ENCODE measurements at regions of chr1 and their contacts with region 1.

Region 1: GRCh38 chr1:22731924-22732720 is 21.5 kb downstream of the EPHB2 start:
- DNase-seq: peak; percentile 54
- ATAC-seq: peak; percentile 59
- H3K4me3 Mint-ChIP-seq: no peak overlapping the region
- H3K27ac Mint-ChIP-seq: no peak overlapping the region
- H3K4me1 Mint-ChIP-seq: peaks cover 12% of the 10 kb centered on the region
- H3K27me3 Mint-ChIP-seq: no peaks in the 10 kb centered on the region
- CTCF ChIP-seq: no peak

Region 2: DNA sequence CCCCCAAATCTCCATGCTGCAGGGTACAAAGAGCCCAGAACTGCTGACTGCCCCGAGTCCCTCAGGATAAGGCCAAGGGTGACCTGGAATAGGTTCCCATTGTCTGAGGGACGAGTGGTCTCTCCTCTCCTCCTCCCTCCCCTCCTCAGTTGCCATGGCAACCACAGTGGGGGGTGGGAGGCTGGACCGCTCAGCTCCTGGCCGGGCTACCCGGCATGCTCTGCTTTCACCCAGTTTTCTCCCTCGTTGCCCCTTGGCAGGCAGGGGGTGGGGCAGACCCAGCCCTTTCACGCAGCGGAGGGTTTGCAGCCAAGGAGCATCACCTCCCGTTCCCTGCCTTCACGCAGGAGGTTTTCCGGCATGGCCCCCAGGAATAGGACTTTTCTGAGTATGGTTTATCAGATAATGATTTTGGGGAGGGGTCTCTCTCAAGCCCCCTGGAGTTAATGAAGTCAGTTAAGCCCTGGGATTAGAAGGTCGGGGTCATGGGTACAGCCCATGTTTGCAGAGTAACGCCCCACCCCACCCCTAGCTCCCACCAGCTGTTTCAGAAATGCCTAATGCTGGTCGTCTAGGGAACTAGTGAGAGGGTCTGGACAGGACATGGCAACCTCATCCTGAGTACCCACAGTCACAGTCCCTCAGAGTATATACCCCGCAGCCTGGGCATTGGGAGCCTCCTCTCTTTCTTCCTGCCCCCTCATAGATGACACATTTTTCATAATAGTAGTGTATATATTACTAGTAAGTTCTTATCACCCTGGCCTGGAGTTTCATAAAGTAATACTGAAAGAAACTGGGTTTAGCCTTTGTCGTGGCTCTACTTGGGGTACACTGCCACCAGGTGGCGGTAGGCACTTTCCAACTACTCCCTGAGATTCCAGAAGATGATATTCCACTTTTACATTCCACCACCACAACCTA is 58.4 kb before region 1 on chr1:
- CTCF ChIA-PET with region 1: interaction called, 17 read pairs
- POLR2A ChIA-PET with region 1: no interaction called
- DNase-seq: peak; percentile 67
- ATAC-seq: peak; percentile 49
- H3K4me3 Mint-ChIP-seq: no peak overlapping the region
- H3K27ac Mint-ChIP-seq: no peak overlapping the region
- H3K4me1 Mint-ChIP-seq: peaks cover 7% of the 10 kb centered on the region; the same call in 1 of the 2 replicates
- H3K27me3 Mint-ChIP-seq: no peaks in the 10 kb centered on the region
- CTCF ChIP-seq: peak; percentile 46

Region 3: DNA sequence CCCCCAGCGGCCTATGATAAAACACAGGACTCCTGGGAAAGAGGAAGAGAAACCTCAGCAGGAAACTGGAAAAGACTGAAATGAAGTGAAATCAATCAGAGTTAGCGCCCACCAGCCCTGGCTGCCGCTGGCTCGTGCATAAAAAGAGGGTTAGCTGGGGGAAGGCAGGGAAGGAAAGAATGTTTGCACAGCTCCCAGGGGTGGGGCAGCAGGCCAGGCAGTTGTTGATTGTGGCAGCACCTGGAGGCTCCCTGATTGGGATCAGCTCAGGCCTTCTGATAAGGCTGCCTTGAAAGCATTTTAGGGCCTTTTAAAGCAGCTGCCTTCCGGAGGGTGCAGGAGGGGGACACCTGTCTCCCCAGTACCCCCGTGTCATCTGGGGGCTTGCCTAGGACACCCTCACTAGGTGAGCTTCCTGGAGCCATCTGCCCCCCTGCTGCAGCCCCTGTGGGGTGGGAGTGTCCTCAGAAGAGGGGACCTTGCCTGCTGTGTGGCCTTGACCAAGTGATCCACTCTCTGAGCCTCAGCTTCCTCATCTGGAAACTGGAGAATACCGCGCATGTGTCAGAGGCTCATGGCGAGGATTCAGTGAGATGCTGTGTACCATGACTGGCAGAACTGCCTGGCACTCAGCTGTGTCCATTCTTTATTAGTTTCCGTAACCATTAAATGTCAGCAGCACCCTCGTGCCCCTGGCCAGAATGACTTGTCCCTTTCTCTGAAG is 14.9 kb before region 1 on chr1:
- CTCF ChIA-PET with region 1: interaction called, 15 read pairs
- POLR2A ChIA-PET with region 1: no interaction called
- DNase-seq: no peak
- ATAC-seq: peak; percentile 75
- H3K4me3 Mint-ChIP-seq: no peak overlapping the region
- H3K27ac Mint-ChIP-seq: peak overlapping the region; percentile 53; the same call in 1 of the 2 replicates
- H3K4me1 Mint-ChIP-seq: peaks cover 10% of the 10 kb centered on the region
- H3K27me3 Mint-ChIP-seq: peaks cover 12% of the 10 kb centered on the region
- CTCF ChIP-seq: no peak

Region 4: GRCh38 chr1:22749919-22750688 is 18.0 kb after region 1 on chr1:
- CTCF ChIA-PET with region 1: interaction called, 15 read pairs
- POLR2A ChIA-PET with region 1: no interaction called
- DNase-seq: no peak
- ATAC-seq: no peak
- H3K4me3 Mint-ChIP-seq: no peak overlapping the region
- H3K27ac Mint-ChIP-seq: no peak overlapping the region
- H3K4me1 Mint-ChIP-seq: 0 out of 2 replicates have a peak, but pooled peaks cover 4% of the 10 kb centered on the region
- H3K27me3 Mint-ChIP-seq: no peaks in the 10 kb centered on the region
- CTCF ChIP-seq: no peak